Right ventricle myocardium inferior (tissue), 1 donor: ENCODE measurements at regions of chr1 and their contacts with region 1.

Region 1: GRCh38 chr1:32539584-32540571 is 651 bp downstream of the ZBTB8A start:
- DNase-seq: no peak
- ATAC-seq: peak; percentile 67

Region 2: GRCh38 chr1:32606565-32607371 is 66.9 kb after region 1 on chr1:
- intact Hi-C with region 1: loop called (anchors 5 kb)
- DNase-seq: no peak
- ATAC-seq: no peak